Activated CD8-positive, alpha-beta T cell treated with anti-CD3 and anti-CD28 coated beads, Interleukin-2, amount 10 ng/mL, durations not matched to agents 7 days and 5 days (primary cell): ENCODE measurements at regions of chr1 and their contacts with region 1.

Region 1: GRCh38 chr1:19892628-19893168 is 10.5 kb downstream of the OTUD3 start:
- DNase-seq: no peak
- ATAC-seq: no peak
- H3K4me3 Mint-ChIP-seq: no peak overlapping the region
- H3K27ac Mint-ChIP-seq: no peak overlapping the region
- H3K4me1 Mint-ChIP-seq: peaks cover 4% of the 10 kb centered on the region
- H3K27me3 Mint-ChIP-seq: no peaks in the 10 kb centered on the region

Region 2: GRCh38 chr1:19872190-19872589 is 20.5 kb before region 1 on chr1:
- CTCF ChIA-PET with region 1: no interaction called
- POLR2A ChIA-PET with region 1: no interaction called
- DNase-seq: no peak
- ATAC-seq: no peak
- H3K4me3 Mint-ChIP-seq: no peak overlapping the region
- H3K27ac Mint-ChIP-seq: no peak overlapping the region
- H3K4me1 Mint-ChIP-seq: no peaks in the 10 kb centered on the region
- H3K27me3 Mint-ChIP-seq: peaks cover 26% of the 10 kb centered on the region

Region 3: DNA sequence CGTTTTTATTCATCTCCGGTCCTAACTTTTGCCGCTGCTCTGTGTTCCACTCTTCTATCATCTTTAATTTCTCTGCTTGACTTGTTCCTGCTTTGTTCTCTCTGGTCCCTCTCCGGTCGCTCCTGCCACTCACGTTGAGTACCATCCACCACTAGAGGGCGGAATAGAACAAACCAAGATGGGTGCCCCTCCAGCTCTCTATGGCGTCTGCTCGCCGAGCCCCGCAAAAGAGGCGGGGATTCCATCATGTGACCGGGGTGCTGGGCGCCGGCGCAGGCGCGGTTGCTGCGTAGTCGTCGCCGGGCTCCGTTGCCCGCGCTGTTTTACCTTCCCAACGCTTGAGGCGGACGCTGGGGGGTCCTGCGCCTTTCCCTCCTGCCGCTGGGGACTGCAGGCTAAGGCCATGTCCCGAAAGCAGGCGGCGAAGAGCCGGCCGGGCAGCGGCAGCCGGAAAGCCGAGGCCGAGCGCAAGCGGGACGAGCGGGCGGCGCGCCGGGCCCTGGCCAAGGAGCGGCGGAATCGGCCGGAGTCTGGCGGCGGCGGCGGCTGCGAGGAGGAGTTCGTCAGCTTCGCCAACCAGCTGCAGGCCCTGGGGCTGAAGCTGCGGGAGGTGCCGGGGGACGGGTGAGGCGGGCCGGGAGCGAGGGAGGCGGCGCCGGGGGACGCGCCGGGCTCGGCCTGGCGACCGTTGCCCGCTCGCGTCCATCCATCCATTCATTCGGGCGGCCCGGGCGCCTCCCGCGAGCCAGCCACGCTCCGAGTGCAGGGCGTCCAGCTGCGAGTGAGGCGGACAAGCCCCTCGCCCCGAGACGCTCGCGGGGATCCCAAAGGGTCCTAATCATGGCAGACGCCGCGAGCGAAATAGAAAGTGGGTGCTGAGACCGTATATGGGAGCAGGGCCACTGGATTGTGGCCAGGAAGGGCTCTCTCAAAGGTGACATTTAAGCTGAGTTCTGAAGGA is 10.3 kb before region 1 on chr1 and contains the start of gene OTUD3:
- CTCF ChIA-PET with region 1: interaction called, 14 read pairs
- POLR2A ChIA-PET with region 1: no interaction called
- DNase-seq: peak; percentile 97
- ATAC-seq: peak; percentile 97
- H3K4me3 Mint-ChIP-seq: peak within 1 kb of the TSS; percentile 83
- H3K27ac Mint-ChIP-seq: peak within 1 kb of the TSS; percentile 74
- H3K4me1 Mint-ChIP-seq: peaks cover 28% of the 10 kb centered on the region
- H3K27me3 Mint-ChIP-seq: no peaks in the 10 kb centered on the region
- total RNA-seq, gene OTUD3: 9.7 to 10.4 TPM